ENCODE measurements at regions of chr13 and their contacts with region 1.

Region 1: DNA sequence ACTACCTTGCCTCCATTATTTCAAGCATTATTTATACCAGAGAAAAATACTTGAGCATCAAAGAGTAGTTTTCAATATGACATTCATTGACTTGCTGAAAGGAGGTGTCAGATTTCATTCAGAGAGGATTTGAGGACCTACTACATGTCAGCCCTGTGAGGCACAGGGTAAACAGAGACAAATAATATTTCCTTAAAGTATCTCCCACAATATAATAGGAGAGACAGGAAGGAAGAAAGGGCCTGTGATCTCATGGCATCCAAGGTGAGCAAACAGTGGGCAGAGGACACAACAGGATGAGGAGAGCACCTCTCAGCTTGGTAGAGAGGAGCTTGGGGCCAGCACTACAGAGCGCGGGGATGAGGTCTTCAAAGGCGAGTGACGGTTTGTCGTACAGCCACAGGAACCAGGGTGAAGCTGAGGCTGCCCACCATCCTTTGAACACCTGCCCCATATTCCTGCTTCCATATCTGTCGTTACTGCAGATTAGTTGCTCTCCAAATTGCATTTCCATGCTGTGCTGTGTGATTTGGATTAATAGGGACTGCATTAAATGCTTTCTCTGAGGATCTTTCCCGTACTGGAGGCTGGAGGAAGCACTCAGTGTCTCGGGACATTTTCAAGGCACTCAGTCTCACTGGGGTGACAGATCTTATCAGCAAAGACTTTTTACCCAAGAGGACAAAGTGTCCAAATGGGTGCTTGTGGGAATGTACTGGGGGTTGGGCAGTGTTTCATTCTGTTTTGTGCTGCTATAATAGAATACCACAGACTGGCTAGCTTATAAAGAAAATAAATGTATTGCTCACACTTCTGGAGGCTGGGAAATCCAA is 59.2 kb downstream of the GJA3 start:
- DNase-seq: no peak
- ATAC-seq: no peak
- H3K4me3 Mint-ChIP-seq: no peak overlapping the region
- H3K27ac Mint-ChIP-seq: no peak overlapping the region
- H3K4me1 Mint-ChIP-seq: no peaks in the 10 kb centered on the region
- H3K27me3 Mint-ChIP-seq: peaks cover 40% of the 10 kb centered on the region

Region 2: DNA sequence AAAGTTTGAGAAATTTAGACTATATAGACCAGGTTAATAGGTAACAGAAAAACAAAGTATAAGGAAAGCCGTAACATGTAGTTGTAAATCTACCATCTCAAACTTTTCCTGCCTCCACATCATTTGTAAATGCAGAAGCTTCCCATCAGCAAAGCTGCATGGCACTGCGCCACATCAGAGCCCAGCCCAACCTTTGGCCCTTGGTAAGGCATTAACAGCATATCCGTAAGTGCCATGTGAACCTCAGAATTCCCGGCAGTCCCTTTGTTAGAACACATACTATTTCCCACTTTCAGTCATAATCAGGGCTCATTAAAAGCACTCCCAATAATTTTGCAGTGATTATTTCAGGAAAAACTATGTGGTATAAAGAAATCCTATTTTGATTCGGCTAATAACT is 416.7 kb before region 1 on chr13:
- CTCF ChIA-PET with region 1: no interaction called
- POLR2A ChIA-PET with region 1: no interaction called
- intact Hi-C with region 1: no loop called
- DNase-seq: no peak
- ATAC-seq: no peak
- H3K4me3 Mint-ChIP-seq: no peak overlapping the region
- H3K27ac Mint-ChIP-seq: no peak overlapping the region
- H3K4me1 Mint-ChIP-seq: peaks cover 24% of the 10 kb centered on the region
- H3K27me3 Mint-ChIP-seq: no peaks in the 10 kb centered on the region

Region 3: DNA sequence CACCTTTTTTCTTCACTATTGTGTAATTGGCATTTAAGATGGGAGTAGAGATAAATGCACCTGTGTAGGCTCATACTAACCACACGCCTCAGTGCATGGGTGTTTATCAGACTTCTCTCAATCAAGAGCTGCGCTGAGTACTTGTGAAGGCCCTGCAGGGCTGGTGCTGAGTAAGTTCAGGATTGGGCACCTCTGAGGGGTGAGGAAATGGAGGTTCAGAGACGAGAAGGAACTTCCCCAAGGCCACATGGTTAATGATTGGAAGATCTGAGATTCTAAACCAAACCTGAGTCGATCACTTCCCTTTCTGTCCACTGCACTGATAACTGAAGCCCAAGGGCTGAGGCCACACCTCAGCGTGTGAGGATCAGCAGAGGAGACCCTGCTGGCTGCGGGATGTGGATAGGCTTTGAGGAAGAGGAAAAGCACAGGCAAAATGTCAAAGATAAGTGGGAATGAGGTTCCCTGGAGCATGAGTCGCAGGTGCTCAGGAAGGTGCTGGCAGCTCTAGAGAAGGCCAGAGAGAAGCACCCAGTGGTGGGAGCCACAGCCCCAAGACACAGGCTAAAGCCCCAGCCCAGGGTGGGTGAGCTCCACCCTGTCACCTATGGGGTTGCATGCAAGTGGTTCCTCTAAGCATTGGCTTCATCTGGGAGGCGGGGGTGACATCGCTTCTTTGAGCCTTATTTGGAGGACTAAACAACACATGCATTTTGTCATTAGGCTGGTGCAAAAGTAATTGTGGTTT is 162.7 kb after region 1 on chr13:
- CTCF ChIA-PET with region 1: no interaction called
- POLR2A ChIA-PET with region 1: interaction called, 10 read pairs
- intact Hi-C with region 1: no loop called
- DNase-seq: peak; percentile 40
- ATAC-seq: peak; percentile 83
- H3K4me3 Mint-ChIP-seq: no peak overlapping the region
- H3K27ac Mint-ChIP-seq: no peak overlapping the region
- H3K4me1 Mint-ChIP-seq: peaks cover 11% of the 10 kb centered on the region
- H3K27me3 Mint-ChIP-seq: no peaks in the 10 kb centered on the region